HepG2 (cell line): ENCODE measurements at regions of chr3 and their contacts with region 1.

Region 1: DNA sequence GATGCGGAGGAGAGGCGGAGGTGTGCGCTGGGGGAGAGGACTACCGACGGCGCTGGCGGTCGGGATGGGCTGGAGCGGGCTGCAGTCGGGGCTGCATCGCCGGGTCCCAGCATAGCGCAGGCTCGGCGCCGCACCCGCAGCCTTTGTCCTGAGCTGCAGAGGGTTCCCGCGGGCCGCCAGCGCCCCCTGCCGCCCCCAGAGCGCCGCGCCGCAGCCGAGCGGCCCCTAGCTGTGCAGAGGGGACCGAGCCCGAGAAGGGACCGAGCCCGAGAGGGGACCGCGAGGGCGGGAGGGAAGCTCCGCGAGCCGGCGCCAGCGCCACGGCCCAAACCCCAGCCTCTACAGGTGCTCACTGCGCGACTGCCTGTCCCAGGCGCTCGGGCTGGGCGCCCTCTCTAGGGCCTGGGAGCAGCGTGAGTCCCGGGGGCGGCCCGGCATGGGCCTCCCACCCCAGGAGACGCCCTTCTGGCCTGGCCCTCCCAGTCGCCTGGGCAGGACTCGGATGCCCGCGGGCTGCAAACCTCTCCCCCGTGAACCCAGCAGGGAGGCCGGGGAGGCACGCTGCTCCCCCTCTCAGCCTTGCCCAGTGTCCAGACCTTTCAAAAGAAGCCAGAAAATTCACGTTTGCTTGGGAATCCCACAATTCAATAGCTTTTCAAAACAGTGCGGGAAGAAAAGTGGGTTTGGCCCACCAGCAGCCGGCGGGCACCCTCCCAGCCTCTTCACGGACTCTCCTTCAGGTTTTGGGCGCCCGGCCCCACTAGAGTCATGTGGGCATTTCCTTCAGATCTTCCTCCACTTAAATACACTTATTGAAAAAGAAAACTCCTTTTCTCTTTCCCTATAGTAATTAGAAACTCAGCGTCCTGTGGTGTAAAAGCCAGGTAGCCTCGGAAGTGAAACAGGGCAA is 134.7 kb downstream of the TPRA1 start:
- DNase-seq: peak; percentile 41
- ATAC-seq: peak; percentile 99
- H3K4me3 ChIP-seq: peak overlapping the region in 1 of 3 experiments; percentile 32; a peak in 1 of 6 replicates
- H3K27ac ChIP-seq: no peak overlapping the region
- H3K4me1 ChIP-seq: no peaks in the 10 kb centered on the region
- H3K27me3 ChIP-seq: peaks cover 2 to 66% of the 10 kb centered on the region in 2 experiments; a peak in 4 of 5 replicates
- CTCF ChIP-seq: peak; percentile 88
- EP300 ChIP-seq: no peak
- POLR2A ChIP-seq: no peak
- RAD21 ChIP-seq: peak; percentile 99

Region 2: DNA sequence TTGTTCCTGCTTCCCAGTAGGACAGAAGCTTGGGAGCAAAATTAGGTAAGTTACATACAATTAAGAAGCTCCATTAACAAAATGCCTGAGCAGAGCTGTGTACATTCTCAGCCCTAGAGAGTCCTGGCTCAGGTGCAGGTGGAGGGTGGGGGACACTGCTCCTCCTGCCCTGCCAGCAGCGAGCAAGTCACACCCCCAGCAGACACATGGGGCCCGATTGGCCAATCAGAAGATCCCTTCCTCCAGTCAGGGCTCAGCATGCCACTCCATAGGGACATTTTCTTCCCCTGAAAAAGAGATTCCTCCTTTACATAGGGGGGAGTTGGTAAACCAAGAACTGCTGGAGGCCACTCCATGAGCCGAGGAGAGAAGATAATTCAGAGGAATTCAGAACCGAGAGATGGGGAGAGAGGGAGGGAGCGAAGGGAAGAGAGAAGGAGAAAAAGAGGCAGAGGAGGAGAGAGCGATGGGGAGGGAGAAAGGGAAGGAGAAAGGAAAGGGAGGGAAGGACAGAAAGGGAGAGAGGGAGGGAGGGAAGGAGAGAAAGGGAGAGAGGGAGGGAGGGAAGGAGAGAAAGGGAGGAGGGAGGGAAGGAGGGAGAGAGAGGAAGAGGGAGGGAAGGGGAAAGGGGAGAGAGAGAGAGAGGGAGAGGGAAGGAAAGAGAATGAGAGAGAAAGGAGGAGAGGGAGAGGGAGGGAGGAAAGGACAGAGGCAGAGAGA is 410.6 kb before region 1 on chr3:
- CTCF ChIA-PET with region 1: no interaction called
- POLR2A ChIA-PET with region 1: no interaction called
- in situ Hi-C with region 1: no loop called
- intact Hi-C with region 1: loop called (anchors 5 kb)
- DNase-seq: no peak
- ATAC-seq: peak; percentile 67
- H3K4me3 ChIP-seq: no peak overlapping the region
- H3K27ac ChIP-seq: no peak overlapping the region
- H3K4me1 ChIP-seq: no peaks in the 10 kb centered on the region
- H3K27me3 ChIP-seq: peaks cover 11 to 21% of the 10 kb centered on the region in 2 experiments
- CTCF ChIP-seq: no peak
- EP300 ChIP-seq: no peak
- POLR2A ChIP-seq: no peak
- RAD21 ChIP-seq: no peak

Region 3: DNA sequence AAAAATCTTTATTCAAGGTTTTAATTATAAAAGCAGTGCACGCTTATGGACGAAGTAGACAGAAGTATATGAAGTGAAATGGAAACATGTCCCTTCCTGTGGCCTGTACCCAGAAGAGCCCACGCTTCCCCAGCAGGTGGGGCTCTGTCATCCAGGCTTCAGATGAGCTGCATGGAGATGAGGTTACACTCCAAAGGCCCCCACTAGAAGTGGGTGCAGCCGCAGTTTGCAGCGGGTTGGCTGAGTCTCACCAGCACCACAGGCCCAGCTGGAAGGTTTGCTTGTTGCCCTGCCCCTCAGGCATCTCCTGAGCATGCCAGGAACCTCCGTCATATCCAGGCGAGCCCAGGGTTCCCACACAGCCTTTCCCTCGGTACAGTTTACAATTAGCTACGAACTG is 201.1 kb before region 1 on chr3:
- CTCF ChIA-PET with region 1: interaction called, 13 read pairs
- POLR2A ChIA-PET with region 1: no interaction called
- in situ Hi-C with region 1: loop called (anchors 10 kb)
- intact Hi-C with region 1: no loop called
- DNase-seq: peak; percentile 16
- ATAC-seq: peak; percentile 95
- H3K4me3 ChIP-seq: no peak overlapping the region
- H3K27ac ChIP-seq: no peak overlapping the region
- H3K4me1 ChIP-seq: no peaks in the 10 kb centered on the region
- H3K27me3 ChIP-seq: peaks cover 3 to 21% of the 10 kb centered on the region in 2 experiments; a peak in 3 of 5 replicates
- CTCF ChIP-seq: peak; percentile 72
- EP300 ChIP-seq: no peak
- POLR2A ChIP-seq: no peak
- RAD21 ChIP-seq: peak; percentile 39; the same call in 1 of the 2 replicates